ENCODE measurements at regions of chr20 and their contacts with region 1.

Region 1: GRCh38 chr20:31723319-31724078 is 831 bp upstream of the BCL2L1 start:
- DNase-seq: peak; percentile 99
- H3K4me3 ChIP-seq: peak overlapping the region; percentile 59 to 83 (median 78)
- H3K27ac ChIP-seq: peak overlapping the region; percentile 92 to 100 (median 98)
- H3K4me1 ChIP-seq: peaks cover 0 to 36% (median 36%) of the 10 kb centered on the region in 4 donors
- H3K27me3 ChIP-seq: no peaks in the 10 kb centered on the region
- CTCF ChIP-seq: peak; percentile 91 to 99 (median 94)
- EP300 ChIP-seq: no peak
- POLR2A ChIP-seq: peak; percentile 57 to 68

Region 2: DNA sequence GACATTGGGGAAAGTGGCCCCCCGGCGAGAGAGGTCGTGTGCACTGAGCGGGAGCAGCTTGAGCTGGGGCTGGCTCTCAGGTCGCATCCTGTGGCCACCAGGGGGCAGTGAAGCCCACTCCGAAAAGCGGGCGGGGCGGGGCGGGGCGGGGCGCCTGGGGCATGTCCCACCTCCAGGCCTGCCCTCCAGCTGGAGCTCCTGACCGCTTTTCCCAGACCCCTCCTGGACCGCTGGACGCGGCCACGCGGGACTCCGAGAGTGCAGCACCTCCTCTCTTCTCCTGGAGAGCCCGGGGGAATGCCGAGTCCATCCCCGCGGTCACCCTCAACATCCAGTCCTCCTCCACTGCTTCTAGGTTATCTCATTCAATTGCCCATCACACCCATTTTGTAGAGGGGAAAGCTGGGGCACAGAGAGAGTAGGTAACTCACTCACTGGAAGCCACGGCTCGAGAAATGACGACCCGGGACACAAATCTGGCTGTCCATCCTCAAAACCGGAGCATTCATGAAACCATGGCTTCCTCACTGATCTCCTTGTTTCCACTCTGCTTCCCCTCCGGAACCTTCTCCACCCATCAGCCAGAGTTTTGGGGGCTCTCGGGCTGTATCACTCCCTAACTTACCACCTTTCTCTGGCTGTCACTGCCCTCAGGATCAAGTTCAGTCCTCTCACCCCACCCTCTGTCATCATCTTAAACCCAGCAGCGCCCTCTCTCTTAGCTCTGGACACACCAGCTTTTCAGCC is 61.7 kb before region 1 on chr20:
- intact Hi-C with region 1: loop called (anchors 1 kb)
- DNase-seq: peak; percentile 92
- H3K4me3 ChIP-seq: peak overlapping the region; percentile 24 to 45 (median 40)
- H3K27ac ChIP-seq: peak overlapping the region; percentile 69 to 78 (median 73)
- H3K4me1 ChIP-seq: peaks cover 0 to 43% (median 38%) of the 10 kb centered on the region in 4 donors
- H3K27me3 ChIP-seq: no peaks in the 10 kb centered on the region
- CTCF ChIP-seq: peak; percentile 53 to 89 (median 58)
- EP300 ChIP-seq: no peak
- POLR2A ChIP-seq: no peak

Region 3: DNA sequence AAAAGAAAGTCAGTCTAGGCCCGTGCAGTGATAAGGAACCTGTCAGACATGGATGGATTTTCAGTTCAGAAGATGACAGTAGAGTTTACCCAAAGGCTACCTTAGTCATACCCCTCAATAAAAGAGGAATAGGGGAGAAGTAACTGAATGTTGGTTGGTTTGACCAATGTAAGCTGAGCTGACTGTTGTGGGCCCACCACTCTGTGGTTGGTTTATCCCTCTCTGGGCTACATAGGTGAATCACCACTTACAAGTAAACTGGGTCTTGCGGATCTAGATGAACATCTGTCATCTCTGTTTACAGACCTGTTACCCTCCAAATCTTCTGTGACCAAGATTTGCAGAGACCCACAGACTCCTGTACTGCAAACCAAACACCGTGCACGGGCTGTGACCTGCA is 58.4 kb after region 1 on chr20:
- intact Hi-C with region 1: no loop called
- DNase-seq: no peak
- H3K4me3 ChIP-seq: no peak overlapping the region
- H3K27ac ChIP-seq: no peak overlapping the region
- H3K4me1 ChIP-seq: no peaks in the 10 kb centered on the region
- H3K27me3 ChIP-seq: no peaks in the 10 kb centered on the region
- CTCF ChIP-seq: no peak
- EP300 ChIP-seq: no peak
- POLR2A ChIP-seq: no peak